GM12878 (cell line): ENCODE measurements at regions of chr9 and their contacts with region 1.

Region 1: DNA sequence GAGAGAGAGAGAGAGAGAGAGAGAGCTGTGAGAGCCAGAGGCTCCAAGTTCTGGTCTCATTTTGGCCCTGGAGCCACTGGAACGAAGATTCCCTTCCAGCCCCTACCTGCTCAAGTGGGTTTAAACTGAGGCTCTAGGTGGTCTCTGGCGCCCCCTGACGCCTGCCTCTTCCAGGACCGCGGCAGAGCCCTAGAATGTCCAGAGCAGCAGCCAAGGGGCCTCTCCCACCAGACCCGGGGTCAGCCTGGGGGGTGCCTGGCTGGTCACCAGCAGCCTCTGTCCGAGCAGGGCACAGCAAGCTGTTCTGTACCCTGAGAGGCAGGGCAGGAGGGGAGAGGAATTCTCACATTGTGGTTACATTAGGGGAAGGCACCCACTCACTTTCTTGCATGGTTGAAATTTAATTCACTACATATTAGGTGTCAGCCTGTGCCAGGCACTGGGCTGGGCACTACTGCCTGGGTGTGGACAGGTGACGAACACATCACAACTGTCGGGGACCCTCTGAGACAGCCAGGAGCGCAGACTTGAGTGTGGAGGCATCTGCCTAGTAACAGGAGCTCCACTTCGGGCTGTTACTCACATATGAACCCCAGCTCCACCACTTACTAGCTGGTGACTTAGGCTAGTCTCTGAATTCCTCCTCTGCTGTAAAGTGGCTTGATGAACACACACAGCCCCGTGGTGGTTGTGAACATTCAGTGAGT is 44.5 kb downstream of the AMBP start:
- DNase-seq: no peak
- ATAC-seq: peak; percentile 51; the same call in 2 of the 3 replicates
- H3K4me3 ChIP-seq: no peak overlapping the region
- H3K27ac ChIP-seq: no peak overlapping the region
- H3K4me1 ChIP-seq: no peaks in the 10 kb centered on the region
- H3K27me3 ChIP-seq: no peaks in the 10 kb centered on the region
- CTCF ChIP-seq: peak; percentile 28 to 35 (median 35); a peak in 2 of 6 replicates
- EP300 ChIP-seq: no peak
- POLR2A ChIP-seq: no peak
- RAD21 ChIP-seq: peak; percentile 43

Region 2: DNA sequence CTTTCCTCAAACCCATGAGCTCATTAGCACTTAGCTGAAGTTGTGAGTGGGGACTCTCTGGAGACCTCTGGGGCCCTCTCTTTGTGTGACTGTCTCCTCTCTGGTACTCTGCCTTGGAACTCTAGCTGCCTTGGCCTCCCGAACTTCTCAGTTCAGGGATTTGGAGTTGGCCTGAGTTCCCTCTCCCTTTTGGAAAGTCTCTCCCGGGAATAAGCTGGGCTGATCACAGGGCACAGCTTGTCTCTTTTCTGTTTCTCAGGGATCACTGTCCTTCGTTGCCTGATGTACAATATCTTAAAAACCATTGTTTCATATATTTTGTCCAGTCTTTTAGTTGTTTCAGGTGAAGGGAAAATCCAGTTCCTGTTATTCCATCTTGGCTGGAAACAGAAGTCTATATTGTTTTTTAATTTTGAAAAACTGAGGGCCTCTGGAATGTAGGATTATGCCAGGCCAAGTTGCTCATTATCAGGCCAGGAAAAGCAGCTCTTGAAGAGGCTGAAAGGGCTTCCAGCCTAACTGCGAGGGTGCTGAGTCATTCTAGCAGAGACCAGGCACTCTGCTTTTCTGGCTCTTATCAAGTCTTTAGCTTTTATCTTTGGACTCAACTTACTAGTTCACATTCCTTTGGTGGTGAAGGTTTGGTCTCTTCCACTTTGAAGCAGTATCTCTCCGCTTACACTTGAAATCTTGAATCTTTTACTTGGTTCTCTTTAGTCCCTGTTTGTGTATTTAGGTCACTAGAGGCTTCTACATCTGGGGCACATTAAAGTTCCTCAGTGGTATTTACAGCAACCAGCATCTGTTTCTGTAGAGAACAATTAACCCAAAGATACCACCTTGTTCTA is 578.4 kb before region 1 on chr9:
- CTCF ChIA-PET with region 1: no interaction called
- POLR2A ChIA-PET with region 1: no interaction called
- RAD21 ChIA-PET with region 1: no interaction called
- SMC1A ChIA-PET with region 1: no interaction called
- in situ Hi-C with region 1: loop called (anchors 25 kb)
- intact Hi-C with region 1: no loop called
- DNase-seq: no peak
- ATAC-seq: peak; percentile 71
- H3K4me3 ChIP-seq: no peak overlapping the region
- H3K27ac ChIP-seq: no peak overlapping the region
- H3K4me1 ChIP-seq: peaks cover 9% of the 10 kb centered on the region
- H3K27me3 ChIP-seq: no peaks in the 10 kb centered on the region
- CTCF ChIP-seq: no peak
- EP300 ChIP-seq: no peak
- POLR2A ChIP-seq: no peak
- RAD21 ChIP-seq: no peak

Region 3: DNA sequence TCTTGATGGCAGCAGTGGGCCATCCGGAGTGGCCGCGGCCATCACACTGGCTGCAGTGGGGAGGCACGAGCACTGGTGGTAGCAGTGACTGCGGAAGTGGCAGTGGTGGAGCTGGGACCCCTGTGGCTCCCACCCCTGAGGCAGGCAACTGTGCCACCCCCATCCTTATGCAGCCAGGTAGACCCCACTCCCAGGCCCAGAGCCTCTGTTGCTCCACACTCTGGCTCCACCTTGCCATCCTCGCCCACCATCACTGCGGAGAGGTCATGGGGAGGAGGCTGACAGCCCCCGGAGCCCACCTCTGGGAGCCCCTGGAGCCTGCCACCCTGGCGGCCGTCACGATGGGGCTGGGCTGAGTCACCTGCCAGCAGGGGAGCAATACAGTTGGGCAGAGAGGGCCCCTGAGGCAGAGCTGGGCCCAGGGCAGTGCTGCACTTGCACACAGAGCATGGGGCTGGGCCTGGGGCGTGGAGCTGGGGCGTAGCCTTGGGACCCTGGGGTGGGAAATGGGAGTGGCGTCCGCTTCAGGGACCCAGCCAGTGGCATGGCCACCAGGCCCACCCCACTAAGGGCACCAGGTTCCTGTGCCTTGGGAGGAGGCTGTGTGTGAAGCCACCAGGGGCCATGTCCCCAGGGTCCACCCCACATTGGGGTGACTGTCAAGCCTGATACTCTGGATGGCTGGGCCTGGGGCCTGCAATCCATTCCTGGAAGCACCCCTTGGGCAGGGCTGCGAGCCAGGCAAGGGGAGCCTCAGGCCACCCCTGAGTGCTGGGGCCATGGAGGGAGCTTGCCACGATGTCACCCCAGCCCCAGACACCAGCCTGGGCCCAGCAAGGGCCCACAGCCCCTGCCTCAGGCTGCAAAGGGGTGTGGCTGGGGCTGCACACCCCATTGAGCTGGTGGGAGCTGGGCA is 36.9 kb after region 1 on chr9:
- CTCF ChIA-PET with region 1: no interaction called
- POLR2A ChIA-PET with region 1: no interaction called
- RAD21 ChIA-PET with region 1: no interaction called
- SMC1A ChIA-PET with region 1: no interaction called
- in situ Hi-C with region 1: no loop called
- intact Hi-C with region 1: no loop called
- DNase-seq: no peak
- ATAC-seq: no peak
- H3K4me3 ChIP-seq: no peak overlapping the region
- H3K27ac ChIP-seq: no peak overlapping the region
- H3K4me1 ChIP-seq: no peaks in the 10 kb centered on the region
- H3K27me3 ChIP-seq: no peaks in the 10 kb centered on the region
- CTCF ChIP-seq: no peak
- EP300 ChIP-seq: no peak
- POLR2A ChIP-seq: no peak
- RAD21 ChIP-seq: no peak